Activated naive CD4-positive, alpha-beta T cell treated with anti-CD3 and anti-CD28 coated beads for 36 hours (primary cell): ENCODE measurements at regions of chr5 and their contacts with region 1.

Region 1: GRCh38 chr5:1315709-1316587 is 21.1 kb upstream of the TERT start:
- DNase-seq: peak; percentile 81
- H3K4me3 Mint-ChIP-seq: peak overlapping the region; percentile 58
- H3K27ac Mint-ChIP-seq: peak overlapping the region; percentile 92
- H3K4me1 Mint-ChIP-seq: peaks cover 60% of the 10 kb centered on the region
- H3K27me3 Mint-ChIP-seq: no peaks in the 10 kb centered on the region

Region 2: DNA sequence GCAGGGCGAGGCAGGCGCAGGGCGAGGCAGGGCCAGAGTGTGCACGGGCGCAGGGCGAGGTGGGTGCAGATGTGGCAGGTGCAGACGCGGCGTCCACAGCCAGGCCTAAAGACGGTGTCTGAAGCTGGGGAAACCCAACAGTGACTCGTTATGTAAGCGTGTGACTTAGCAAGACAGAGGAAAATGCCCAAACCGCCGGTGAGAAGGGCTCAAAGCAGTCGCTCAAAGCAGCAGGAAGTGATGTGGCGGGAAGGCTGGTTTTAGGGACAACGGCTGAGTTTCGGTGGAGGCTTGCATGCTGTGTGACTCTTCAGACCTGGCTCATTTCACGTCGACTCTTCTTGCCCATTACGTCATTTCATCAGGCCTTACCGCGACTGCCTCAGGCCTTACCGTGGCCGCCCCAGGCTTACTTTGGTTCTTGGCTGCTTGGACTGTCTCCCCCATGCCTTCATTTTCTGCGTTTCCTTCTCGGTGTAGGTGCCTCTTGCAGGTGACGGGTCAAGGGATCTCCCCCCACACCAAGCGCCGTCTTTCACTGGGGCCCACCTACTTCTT is 923.4 kb before region 1 on chr5:
- CTCF ChIA-PET with region 1: no interaction called
- intact Hi-C with region 1: loop called (anchors 5 kb)
- DNase-seq: peak; percentile 96
- H3K4me3 Mint-ChIP-seq: peak overlapping the region; percentile 69
- H3K27ac Mint-ChIP-seq: peak overlapping the region; percentile 91
- H3K4me1 Mint-ChIP-seq: peaks cover 27% of the 10 kb centered on the region
- H3K27me3 Mint-ChIP-seq: no peaks in the 10 kb centered on the region

Region 3: GRCh38 chr5:1255081-1255561 is 60.8 kb before region 1 on chr5:
- CTCF ChIA-PET with region 1: no interaction called
- intact Hi-C with region 1: loop called (anchors 5 kb)
- DNase-seq: peak; percentile 57
- H3K4me3 Mint-ChIP-seq: peak overlapping the region; percentile 0
- H3K27ac Mint-ChIP-seq: peak overlapping the region; percentile 32
- H3K4me1 Mint-ChIP-seq: peaks cover 22% of the 10 kb centered on the region
- H3K27me3 Mint-ChIP-seq: no peaks in the 10 kb centered on the region

Region 4: GRCh38 chr5:1344975-1345838 is 29.3 kb after region 1 on chr5 and contains the start of gene CLPTM1L:
- CTCF ChIA-PET with region 1: no interaction called
- intact Hi-C with region 1: loop called (anchors 1 kb)
- DNase-seq: peak; percentile 87
- H3K4me3 Mint-ChIP-seq: peak within 1 kb of the TSS; percentile 79
- H3K27ac Mint-ChIP-seq: peak within 1 kb of the TSS; percentile 70
- H3K4me1 Mint-ChIP-seq: peaks cover 31% of the 10 kb centered on the region
- H3K27me3 Mint-ChIP-seq: no peaks in the 10 kb centered on the region
- total RNA-seq, gene CLPTM1L: 48.0 to 48.5 TPM

Region 5: GRCh38 chr5:1737790-1738405 is 421.9 kb after region 1 on chr5:
- CTCF ChIA-PET with region 1: no interaction called
- intact Hi-C with region 1: no loop called
- DNase-seq: peak; percentile 68
- H3K4me3 Mint-ChIP-seq: no peak overlapping the region
- H3K27ac Mint-ChIP-seq: no peak overlapping the region
- H3K4me1 Mint-ChIP-seq: no peaks in the 10 kb centered on the region
- H3K27me3 Mint-ChIP-seq: peaks cover 17% of the 10 kb centered on the region

Region 6: DNA sequence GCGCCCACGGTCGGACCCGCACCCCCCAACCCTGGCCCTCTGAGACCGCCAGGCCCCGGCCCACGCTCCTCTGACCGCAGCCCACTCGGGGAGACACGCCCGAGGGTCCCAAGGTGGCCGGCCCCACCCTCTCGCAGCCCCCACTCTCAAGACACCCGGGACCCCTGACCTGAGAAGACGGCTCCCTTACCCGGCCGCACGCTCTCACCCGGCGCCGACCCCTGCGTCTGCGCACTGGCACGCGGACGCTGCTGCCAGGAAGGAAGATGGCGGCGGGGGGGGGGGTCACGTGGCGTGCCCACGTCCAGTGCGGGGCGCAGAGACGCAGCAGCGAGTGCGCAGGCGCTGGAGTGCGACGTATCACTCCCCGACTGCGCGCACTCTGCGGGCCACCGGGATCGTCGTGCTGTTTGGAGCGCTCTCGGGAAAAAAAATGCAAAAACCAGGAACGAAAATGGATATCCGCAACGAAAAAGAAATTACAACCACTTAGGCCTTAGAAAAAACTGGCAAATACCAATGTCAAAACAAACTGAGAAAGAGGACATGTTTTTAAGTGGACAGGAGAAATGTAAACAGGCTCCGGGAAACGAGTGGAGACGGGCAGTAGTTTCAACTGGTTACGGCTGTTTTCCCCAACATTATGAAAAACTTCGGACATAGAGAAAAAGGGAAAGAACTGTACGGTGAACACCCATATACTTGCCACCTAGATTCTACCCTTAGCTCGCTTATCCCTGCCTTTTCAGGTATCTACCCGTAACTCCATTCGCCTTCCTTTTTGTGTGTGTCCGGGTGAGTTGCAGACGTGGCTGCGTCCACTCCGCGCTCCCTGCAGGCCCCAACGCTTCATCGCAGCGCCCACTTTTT is 483.9 kb after region 1 on chr5 and contains the start of gene MRPL36:
- CTCF ChIA-PET with region 1: no interaction called
- intact Hi-C with region 1: loop called (anchors 10 kb)
- DNase-seq: peak; percentile 94
- H3K4me3 Mint-ChIP-seq: peak within 1 kb of the TSS; percentile 99
- H3K27ac Mint-ChIP-seq: peak within 1 kb of the TSS; percentile 98
- H3K4me1 Mint-ChIP-seq: peaks cover 55% of the 10 kb centered on the region
- H3K27me3 Mint-ChIP-seq: no peaks in the 10 kb centered on the region
- total RNA-seq, gene MRPL36: 60.7 to 63.4 TPM